H1 (cell line): ENCODE measurements at regions of chr15 and their contacts with region 1.

Region 1: DNA sequence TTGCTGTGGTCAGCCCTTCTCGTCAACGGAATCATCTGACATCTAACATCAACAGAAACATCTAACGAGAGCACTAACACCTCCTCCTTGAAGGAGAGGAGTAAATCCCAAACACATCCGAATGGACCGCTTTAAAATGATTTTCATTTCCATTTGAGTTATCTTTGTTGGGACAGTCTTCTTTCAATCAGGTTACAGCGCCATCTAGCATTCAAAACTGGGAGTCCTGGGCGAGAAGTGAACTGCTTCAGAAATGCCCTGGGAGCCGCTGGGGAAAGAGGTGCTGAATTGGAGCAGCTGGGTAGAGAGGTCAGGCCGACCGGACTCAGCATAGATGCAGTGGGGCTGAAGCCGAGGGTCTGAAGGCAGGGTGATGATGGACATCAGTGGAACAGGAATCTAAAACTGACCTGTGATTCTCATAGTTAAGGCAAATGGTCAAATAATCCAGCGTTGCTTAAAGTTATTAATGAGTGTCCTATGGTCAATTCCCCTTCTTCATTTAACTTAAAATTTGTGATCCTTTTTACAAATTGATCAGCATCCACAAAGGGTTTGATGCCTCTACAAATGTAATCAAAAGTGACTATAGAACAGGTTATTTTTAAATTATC is 170.0 kb upstream of the NDN start:
- DNase-seq: peak in 1 of 2 experiments; percentile 71
- H3K4me3 ChIP-seq: peak overlapping the region in 3 of 4 experiments; percentile 6 to 43 (median 15); a peak in 4 of 8 replicates
- H3K27ac ChIP-seq: no peak overlapping the region
- H3K4me1 ChIP-seq: no peaks in the 10 kb centered on the region
- H3K27me3 ChIP-seq: no peaks in the 10 kb centered on the region; a peak in 1 of 7 replicates
- CTCF ChIP-seq: peak; percentile 18 to 56 (median 43)
- EP300 ChIP-seq: no peak
- POLR2A ChIP-seq: no peak
- RAD21 ChIP-seq: peak; percentile 49 to 53

Region 2: DNA sequence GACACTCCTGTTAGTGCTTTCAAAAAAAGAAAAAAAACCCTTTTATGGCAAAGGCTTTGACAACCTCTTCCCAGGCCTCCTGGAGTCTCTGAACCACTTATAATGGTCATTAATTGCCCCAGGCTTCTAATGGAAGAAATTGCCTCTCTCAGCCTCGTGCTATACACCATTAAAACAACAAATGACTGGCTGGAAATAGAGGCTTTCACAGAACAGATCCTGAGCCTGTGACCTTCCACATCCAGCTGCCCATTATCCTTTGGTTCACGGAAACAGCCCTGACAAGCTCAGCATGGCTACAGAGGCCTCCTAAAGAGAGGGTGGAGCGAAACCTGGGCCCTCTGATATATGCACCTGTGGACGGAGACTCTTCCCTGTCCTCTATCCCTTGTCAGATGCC is 318.5 kb before region 1 on chr15:
- CTCF ChIA-PET with region 1: no interaction called
- POLR2A ChIA-PET with region 1: no interaction called
- DNase-seq: no peak
- H3K4me3 ChIP-seq: no peak overlapping the region
- H3K27ac ChIP-seq: no peak overlapping the region
- H3K4me1 ChIP-seq: no peaks in the 10 kb centered on the region
- H3K27me3 ChIP-seq: no peaks in the 10 kb centered on the region
- CTCF ChIP-seq: no peak
- EP300 ChIP-seq: no peak
- POLR2A ChIP-seq: no peak
- RAD21 ChIP-seq: no peak

Region 3: DNA sequence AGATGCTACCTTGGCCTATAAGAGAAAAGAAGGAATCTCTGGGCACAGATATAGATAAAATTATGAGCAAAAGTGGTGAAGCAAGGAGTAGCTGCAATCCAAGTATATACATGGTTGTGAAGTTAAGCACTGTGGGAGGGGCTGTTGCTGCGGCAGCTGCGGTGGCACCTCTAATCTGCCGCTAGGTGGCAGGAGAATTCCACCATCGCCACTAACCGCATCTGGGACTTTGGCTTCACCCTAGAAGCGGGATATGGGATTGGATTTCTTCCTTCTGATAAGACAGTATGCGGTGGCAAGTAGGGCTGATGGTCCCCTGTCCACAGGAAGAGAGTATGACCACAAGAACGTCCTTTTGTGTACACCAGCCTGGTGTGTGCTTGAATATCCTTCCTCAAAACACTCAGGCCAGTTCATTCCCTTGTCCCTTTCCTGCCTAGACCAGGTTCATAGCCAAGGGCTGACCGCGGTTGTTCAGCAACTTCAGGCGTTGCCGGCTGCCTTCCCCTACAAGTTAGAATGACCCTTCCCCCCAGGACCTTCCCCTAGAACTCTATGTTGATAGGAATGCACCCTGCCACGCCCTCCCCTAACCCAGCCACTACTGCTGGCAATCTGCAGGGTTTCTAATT is 214.6 kb before region 1 on chr15:
- CTCF ChIA-PET with region 1: interaction called, 41 read pairs
- POLR2A ChIA-PET with region 1: interaction called, 3 read pairs
- DNase-seq: peak in 1 of 2 experiments; percentile 70
- H3K4me3 ChIP-seq: 0 out of 8 replicates have a peak overlapping the region, but pooled peaks of 1 of the 4 experiments have one; percentile 31
- H3K27ac ChIP-seq: no peak overlapping the region
- H3K4me1 ChIP-seq: no peaks in the 10 kb centered on the region; a peak in 3 of 7 replicates
- H3K27me3 ChIP-seq: peaks cover 4 to 20% (median 8%) of the 10 kb centered on the region in 4 experiments; a peak in 6 of 7 replicates
- CTCF ChIP-seq: peak; percentile 62 to 81 (median 79)
- EP300 ChIP-seq: no peak
- POLR2A ChIP-seq: no peak
- RAD21 ChIP-seq: peak; percentile 87 to 91